Heart right ventricle (tissue), 16 donors: ENCODE measurements at regions of chr3 and their contacts with region 1.

Region 1: DNA sequence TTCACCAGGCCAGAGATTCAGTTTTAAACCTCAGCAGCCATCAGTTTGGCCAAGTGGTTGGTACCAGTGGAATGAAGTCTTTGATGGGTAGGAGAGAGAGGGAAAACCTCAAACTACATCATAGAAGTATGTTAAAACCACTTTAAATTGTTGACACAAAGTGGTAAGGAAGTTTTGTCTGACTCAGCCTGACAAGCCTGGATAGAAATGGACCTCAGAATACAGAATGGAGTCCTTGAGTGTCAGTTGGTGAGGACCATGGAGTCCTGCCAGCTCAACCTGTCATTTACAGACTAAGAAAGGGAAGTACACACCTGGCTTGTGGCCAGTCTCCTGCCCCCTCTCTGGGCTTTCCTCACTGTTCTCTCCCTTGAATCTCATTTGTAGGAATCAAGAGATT is 12.1 kb downstream of the EAF1 start:
- DNase-seq: no peak
- ATAC-seq: no peak
- H3K4me3 ChIP-seq: no peak overlapping the region
- H3K27ac ChIP-seq: peak overlapping the region in 1 of 10 donors; percentile 66
- H3K4me1 ChIP-seq: peaks cover 0 to 47% (median 5%) of the 10 kb centered on the region in 9 donors
- H3K27me3 ChIP-seq: no peaks in the 10 kb centered on the region
- CTCF ChIP-seq: no peak

Region 2: GRCh38 chr3:15557511-15557946 is 118.1 kb after region 1 on chr3:
- intact Hi-C with region 1: loop called in 3 of 10 experiments (anchors 5 to 10 kb)
- DNase-seq: peak in 1 of 2 donors; percentile 55
- ATAC-seq: peak; percentile 59 to 83 (median 75)
- H3K4me3 ChIP-seq: no peak overlapping the region
- H3K27ac ChIP-seq: peak overlapping the region in 1 of 10 donors; percentile 73
- H3K4me1 ChIP-seq: peaks cover 0 to 15% (median 0%) of the 10 kb centered on the region in 9 donors
- H3K27me3 ChIP-seq: no peaks in the 10 kb centered on the region
- CTCF ChIP-seq: peak; percentile 40 to 76 (median 68)